ENCODE measurements at regions of chr18 and their contacts with region 1.

Region 1: DNA sequence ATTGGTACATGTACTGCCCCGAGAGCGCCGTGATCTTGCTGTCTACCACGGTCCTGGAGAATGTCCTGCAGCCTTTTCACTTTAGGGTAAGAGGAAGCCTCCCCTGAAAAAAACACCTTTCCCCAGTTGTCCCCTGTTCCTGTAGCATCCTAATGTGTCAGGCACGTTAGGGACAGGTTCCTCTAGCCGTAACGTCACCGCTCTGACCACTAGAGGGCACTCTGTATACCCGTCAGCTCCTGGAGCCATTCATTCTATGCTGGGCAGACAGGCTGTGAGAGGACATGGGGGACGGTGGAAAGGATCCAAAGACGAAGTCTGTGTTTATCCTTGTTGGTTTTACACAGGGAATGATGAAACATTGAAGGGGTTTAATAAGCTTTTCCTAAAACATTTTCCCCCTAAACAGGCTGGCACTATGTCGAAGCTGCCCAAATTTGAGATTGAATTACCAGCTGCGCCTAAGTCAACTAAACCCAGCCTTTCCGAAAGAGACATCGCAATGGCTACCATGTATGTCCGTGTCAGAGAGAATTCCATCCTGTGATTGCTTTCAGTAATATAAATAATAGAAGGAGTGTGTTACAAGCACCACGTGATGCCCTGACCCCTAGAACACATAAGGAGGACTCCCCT is 12.7 kb downstream of the RMC1 start:
- DNase-seq: peak; percentile 71
- H3K4me3 ChIP-seq: no peak overlapping the region
- H3K27ac ChIP-seq: no peak overlapping the region
- H3K4me1 ChIP-seq: peaks cover 11% of the 10 kb centered on the region
- H3K27me3 ChIP-seq: no peaks in the 10 kb centered on the region
- CTCF ChIP-seq: peak; percentile 89 to 94
- POLR2A ChIP-seq: no peak

Region 2: GRCh38 chr18:23586249-23587196 is 70.5 kb after region 1 on chr18 and contains the start of gene NPC1:
- CTCF ChIA-PET with region 1: interaction called, 10 read pairs
- POLR2A ChIA-PET with region 1: no interaction called
- dilution Hi-C with region 1: no loop called
- intact Hi-C with region 1: loop called (anchors 1 kb)
- DNase-seq: peak; percentile 91
- H3K4me3 ChIP-seq: peak within 1 kb of the TSS; percentile 44 to 76 (median 71)
- H3K27ac ChIP-seq: peak within 1 kb of the TSS; percentile 99
- H3K4me1 ChIP-seq: peaks cover 18% of the 10 kb centered on the region
- H3K27me3 ChIP-seq: no peaks in the 10 kb centered on the region
- CTCF ChIP-seq: peak; percentile 69 to 87
- POLR2A ChIP-seq: peak; percentile 85
- total RNA-seq, gene NPC1: 45.2 and 58.2 TPM in 2 replicates

Region 3: GRCh38 chr18:23812546-23813440 is 296.8 kb after region 1 on chr18:
- CTCF ChIA-PET with region 1: interaction called, 6 read pairs
- POLR2A ChIA-PET with region 1: no interaction called
- dilution Hi-C with region 1: no loop called
- intact Hi-C with region 1: loop called (anchors 5 kb)
- DNase-seq: peak; percentile 58
- H3K4me3 ChIP-seq: no peak overlapping the region
- H3K27ac ChIP-seq: no peak overlapping the region
- H3K4me1 ChIP-seq: no peaks in the 10 kb centered on the region
- H3K27me3 ChIP-seq: no peaks in the 10 kb centered on the region
- CTCF ChIP-seq: peak; percentile 21 to 30
- POLR2A ChIP-seq: no peak

Region 4: GRCh38 chr18:24118750-24119577 is 602.9 kb after region 1 on chr18:
- CTCF ChIA-PET with region 1: no interaction called
- POLR2A ChIA-PET with region 1: no interaction called
- dilution Hi-C with region 1: no loop called
- intact Hi-C with region 1: loop called (anchors 5 kb)
- DNase-seq: peak; percentile 81
- H3K4me3 ChIP-seq: no peak overlapping the region
- H3K27ac ChIP-seq: no peak overlapping the region
- H3K4me1 ChIP-seq: no peaks in the 10 kb centered on the region
- H3K27me3 ChIP-seq: no peaks in the 10 kb centered on the region
- CTCF ChIP-seq: peak; percentile 66 to 74
- POLR2A ChIP-seq: no peak